ENCODE measurements at regions of chr4 and their contacts with region 1.

Region 1: DNA sequence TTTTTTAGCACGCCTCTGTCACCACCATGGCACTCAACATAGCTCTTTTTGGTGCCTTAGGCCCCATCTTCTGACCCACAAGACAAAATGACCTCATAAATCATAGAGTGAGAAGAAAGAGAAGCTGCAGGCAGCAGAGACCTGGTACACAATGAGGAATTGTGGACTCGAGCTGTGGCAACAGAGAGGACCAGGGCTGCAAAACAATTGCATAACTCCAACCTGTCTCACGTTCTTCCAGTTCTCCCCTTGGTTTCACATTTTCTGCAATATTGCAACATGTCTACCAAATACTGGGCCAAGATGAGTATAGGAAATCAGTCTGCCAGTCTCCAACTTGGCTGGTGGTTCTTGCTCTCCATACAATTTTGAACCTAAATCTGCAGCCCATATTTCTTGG is 105.3 kb downstream of the KDR start:
- DNase-seq: no peak
- ATAC-seq: no peak
- H3K4me3 ChIP-seq: no peak overlapping the region
- H3K27ac ChIP-seq: no peak overlapping the region
- H3K4me1 ChIP-seq: no peaks in the 10 kb centered on the region
- H3K27me3 ChIP-seq: no peaks in the 10 kb centered on the region
- CTCF ChIP-seq: no peak

Region 2: DNA sequence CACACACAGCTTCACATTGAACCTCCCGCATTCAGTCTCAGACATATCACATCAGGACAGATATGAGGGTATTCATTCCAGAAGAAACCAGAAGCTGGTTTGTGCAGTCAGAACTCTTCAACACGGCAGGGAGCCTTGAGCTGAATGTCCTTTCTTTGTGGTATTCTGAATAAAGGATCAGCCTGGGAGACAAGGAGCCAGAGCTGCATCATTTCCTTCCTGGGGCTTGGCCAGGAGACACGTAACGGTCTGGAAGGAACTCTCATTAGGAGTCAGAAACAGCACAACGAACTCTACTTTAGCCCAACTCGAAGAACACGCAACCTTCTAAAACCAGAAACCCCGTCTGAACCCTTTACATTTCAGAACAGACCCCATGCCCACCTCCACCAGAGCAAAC is 58.9 kb after region 1 on chr4:
- CTCF ChIA-PET with region 1: no interaction called
- POLR2A ChIA-PET with region 1: no interaction called
- intact Hi-C with region 1: loop called (anchors 10 kb)
- DNase-seq: peak; percentile 64
- ATAC-seq: peak; percentile 82
- H3K4me3 ChIP-seq: no peak overlapping the region
- H3K27ac ChIP-seq: no peak overlapping the region
- H3K4me1 ChIP-seq: peaks cover 4% of the 10 kb centered on the region; the same call in 1 of the 2 replicates
- H3K27me3 ChIP-seq: peaks cover 31% of the 10 kb centered on the region
- CTCF ChIP-seq: no peak

Region 3: GRCh38 chr4:55184600-55185523 is 164.8 kb after region 1 on chr4:
- CTCF ChIA-PET with region 1: no interaction called
- POLR2A ChIA-PET with region 1: no interaction called
- intact Hi-C with region 1: no loop called
- DNase-seq: peak; percentile 76
- ATAC-seq: peak; percentile 38
- H3K4me3 ChIP-seq: peak overlapping the region; percentile 27
- H3K27ac ChIP-seq: peak overlapping the region; percentile 76
- H3K4me1 ChIP-seq: peaks cover 33% of the 10 kb centered on the region
- H3K27me3 ChIP-seq: no peaks in the 10 kb centered on the region
- CTCF ChIP-seq: peak; percentile 89